ENCODE measurements at regions of chr1 and their contacts with region 1.

Region 1: DNA sequence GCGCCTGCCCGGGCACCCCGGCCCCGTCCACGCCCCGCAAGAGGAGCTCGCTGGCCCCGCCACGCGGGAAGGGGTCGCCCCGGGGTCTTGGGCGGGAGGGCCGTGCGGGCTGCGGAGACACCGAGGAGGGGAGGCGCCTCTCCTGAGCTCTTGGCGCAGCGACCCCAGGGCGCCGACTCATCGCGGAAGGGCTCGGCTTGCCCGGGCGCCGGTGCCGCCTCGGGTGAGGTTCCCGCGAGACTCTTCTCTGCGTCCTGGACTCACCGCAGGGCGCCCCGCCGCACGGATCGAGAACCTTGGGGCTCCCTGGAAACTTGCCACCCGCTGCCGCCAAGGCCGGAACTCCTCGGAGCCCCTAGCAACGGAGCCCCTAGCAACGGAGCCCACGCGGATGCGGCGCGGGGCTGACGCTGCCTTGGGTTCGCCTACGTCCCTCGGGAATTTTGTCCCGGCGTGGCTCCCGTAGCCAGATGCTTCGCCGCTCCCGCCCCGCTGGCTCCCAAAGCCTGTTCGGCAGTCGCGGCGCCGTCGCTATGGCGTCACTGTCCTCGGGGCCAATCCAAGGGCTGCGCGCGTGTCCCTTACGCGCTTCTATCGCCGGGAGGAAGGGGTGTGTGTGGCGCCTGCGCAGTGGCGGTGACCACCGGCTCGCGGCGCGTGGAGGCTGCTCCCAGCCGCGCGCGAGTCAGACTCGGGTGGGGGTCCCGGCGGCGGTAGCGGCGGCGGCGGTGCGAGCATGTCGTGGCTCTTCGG is at the start of gene ATAD3A:
- DNase-seq: peak; percentile 95
- H3K4me3 ChIP-seq: peak within 1 kb of the TSS; percentile 80
- H3K27ac ChIP-seq: peak within 1 kb of the TSS; percentile 96
- H3K4me1 ChIP-seq: peaks cover 7% of the 10 kb centered on the region
- CTCF ChIP-seq: no peak; the same call in 1 of the 2 replicates
- total RNA-seq, gene ATAD3A: 79.9 and 81.9 TPM in 2 replicates

Region 2: GRCh38 chr1:1406817-1407635 is 104.7 kb before region 1 on chr1 and contains the start of gene MRPL20:
- CTCF ChIA-PET with region 1: no interaction called
- POLR2A ChIA-PET with region 1: no interaction called
- intact Hi-C with region 1: loop called (anchors 5 kb)
- DNase-seq: peak; percentile 95
- H3K4me3 ChIP-seq: peak within 1 kb of the TSS; percentile 92
- H3K27ac ChIP-seq: peak within 1 kb of the TSS; percentile 73
- H3K4me1 ChIP-seq: peaks cover 19% of the 10 kb centered on the region
- CTCF ChIP-seq: no peak
- total RNA-seq, gene MRPL20: 165 and 196 TPM in 2 replicates

Region 3: DNA sequence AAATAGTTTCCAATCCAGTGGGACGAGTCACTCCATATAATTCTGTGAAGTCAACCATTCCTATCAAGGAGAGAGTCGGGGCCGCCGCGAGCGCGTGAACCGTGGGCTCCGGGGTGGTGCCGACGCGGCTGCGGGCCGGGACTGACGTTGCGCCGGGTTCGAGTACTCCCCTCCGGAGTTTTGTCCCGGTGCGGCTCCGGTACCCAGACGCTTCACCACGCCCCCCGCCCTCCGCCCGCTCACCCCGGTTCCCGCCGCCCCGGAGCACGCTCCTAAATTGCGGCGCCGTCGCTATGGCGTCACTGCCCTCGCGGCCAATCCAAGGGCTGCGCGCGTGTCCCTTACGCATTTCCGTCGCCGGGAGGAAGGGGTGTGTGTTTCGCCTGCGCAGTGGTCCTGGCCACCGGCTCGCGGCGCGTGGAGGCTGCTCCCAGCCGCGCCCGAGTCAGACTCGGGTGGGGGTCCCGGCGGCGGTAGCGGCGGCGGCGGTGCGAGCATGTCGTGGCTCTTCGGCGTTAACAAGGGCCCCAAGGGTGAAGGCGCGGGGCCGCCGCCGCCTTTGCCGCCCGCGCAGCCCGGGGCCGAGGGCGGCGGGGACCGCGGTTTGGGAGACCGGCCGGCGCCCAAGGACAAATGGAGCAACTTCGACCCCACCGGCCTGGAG is 40.2 kb before region 1 on chr1 and contains the start of gene ATAD3B:
- CTCF ChIA-PET with region 1: no interaction called
- POLR2A ChIA-PET with region 1: no interaction called
- intact Hi-C with region 1: loop called (anchors 2 kb)
- DNase-seq: peak; percentile 92
- H3K4me3 ChIP-seq: peak within 1 kb of the TSS; percentile 97
- H3K27ac ChIP-seq: peak within 1 kb of the TSS; percentile 83
- H3K4me1 ChIP-seq: peaks cover 25% of the 10 kb centered on the region
- CTCF ChIP-seq: no peak
- total RNA-seq, gene ATAD3B: 43.8 and 54.9 TPM in 2 replicates

Measured in OCI-LY7 (cell line).